Naive thymus-derived CD4-positive, alpha-beta T cell (primary cell): ENCODE measurements at regions of chr12 and their contacts with region 1.

Region 1: DNA sequence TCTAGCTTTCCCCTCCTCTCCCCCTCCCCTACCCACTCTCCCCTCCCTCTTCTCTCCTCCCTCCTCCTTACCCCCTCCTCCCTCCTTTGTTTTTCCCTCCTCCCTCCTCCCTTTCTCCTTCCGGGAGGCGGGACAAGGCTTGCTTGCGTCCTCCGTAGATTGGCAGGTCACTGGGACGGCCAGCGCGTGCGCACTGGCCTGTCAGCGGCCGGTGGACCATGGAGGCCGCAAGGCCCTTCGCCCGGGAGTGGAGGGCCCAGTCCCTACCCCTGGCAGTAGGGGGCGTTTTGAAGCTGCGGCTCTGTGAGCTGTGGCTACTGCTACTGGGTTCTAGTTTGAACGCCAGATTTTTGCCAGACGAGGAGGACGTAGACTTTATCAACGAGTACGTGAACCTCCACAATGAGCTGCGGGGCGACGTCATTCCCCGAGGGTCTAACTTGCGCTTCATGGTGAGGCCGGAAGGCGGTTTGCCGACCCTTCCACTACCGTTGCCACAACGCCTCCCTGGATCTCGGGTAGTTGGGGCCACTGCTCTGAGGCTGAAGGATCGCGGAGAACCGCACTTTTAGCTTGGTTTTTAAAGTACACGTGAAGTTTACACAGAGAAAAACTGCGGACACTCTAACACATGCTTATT is at the start of gene GLIPR1L2:
- DNase-seq: peak; percentile 75 to 86 (median 80)
- ATAC-seq: peak; percentile 96
- H3K4me3 ChIP-seq: peak within 1 kb of the TSS; percentile 67
- H3K4me3 Mint-ChIP-seq: peak within 1 kb of the TSS; percentile 87 to 98 (median 94)
- H3K27ac ChIP-seq: peak within 1 kb of the TSS; percentile 79
- H3K27ac Mint-ChIP-seq: peak within 1 kb of the TSS; percentile 93 to 99 (median 98)
- H3K4me1 ChIP-seq: peaks cover 14 to 19% of the 10 kb centered on the region in 2 donors
- H3K4me1 Mint-ChIP-seq: peaks cover 26 to 61% (median 44%) of the 10 kb centered on the region in 7 donors
- H3K27me3 ChIP-seq: no peaks in the 10 kb centered on the region
- H3K27me3 Mint-ChIP-seq: peaks cover 0 to 3% (median 0%) of the 10 kb centered on the region in 5 donors
- total RNA-seq, gene GLIPR1L2: 0.22 to 2.3 (median 0.38) TPM

Region 2: GRCh38 chr12:74922117-74922516 is 468.9 kb before region 1 on chr12:
- CTCF ChIA-PET with region 1: no interaction called
- POLR2A ChIA-PET with region 1: no interaction called
- intact Hi-C with region 1: no loop called
- DNase-seq: no peak
- ATAC-seq: no peak
- H3K4me3 ChIP-seq: no peak overlapping the region
- H3K4me3 Mint-ChIP-seq: no peak overlapping the region
- H3K27ac ChIP-seq: no peak overlapping the region
- H3K27ac Mint-ChIP-seq: no peak overlapping the region
- H3K4me1 ChIP-seq: no peaks in the 10 kb centered on the region
- H3K4me1 Mint-ChIP-seq: no peaks in the 10 kb centered on the region
- H3K27me3 ChIP-seq: no peaks in the 10 kb centered on the region
- H3K27me3 Mint-ChIP-seq: no peaks in the 10 kb centered on the region

Region 3: DNA sequence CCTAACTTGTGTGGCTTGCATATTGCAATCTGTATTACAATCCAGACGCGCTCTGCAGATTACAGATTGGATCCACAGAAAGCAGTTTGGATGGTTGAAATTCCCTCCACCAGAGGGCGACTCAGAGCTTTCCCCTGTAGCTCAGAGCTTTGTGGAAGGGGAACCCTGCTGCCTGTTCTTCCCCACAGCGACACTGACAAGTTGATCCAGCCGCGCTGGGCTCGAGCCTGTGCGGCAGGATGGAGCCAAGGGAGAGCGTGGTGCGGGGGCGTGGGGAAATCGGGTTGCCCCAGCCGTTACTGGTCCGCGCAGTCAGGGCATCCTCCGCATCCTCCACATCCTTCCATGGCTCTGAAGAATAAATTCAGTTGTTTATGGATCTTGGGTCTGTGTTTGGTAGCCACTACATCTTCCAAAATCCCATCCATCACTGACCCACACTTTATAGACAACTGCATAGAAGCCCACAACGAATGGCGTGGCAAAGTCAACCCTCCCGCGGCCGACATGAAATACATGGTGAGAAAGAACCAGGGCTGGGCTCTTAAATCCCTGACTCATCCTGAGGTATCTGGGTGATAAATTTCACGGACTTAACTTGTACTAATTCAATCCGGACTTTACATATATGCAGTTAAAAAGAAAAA is 56.5 kb before region 1 on chr12 and contains the start of gene GLIPR1L1:
- CTCF ChIA-PET with region 1: no interaction called
- POLR2A ChIA-PET with region 1: no interaction called
- intact Hi-C with region 1: loop called (anchors 1 kb)
- DNase-seq: peak; percentile 58 to 79 (median 74)
- ATAC-seq: peak; percentile 91
- H3K4me3 ChIP-seq: no peak within 1 kb of the TSS
- H3K4me3 Mint-ChIP-seq: peak within 1 kb of the TSS; percentile 18 to 80 (median 74)
- H3K27ac ChIP-seq: no peak within 1 kb of the TSS
- H3K27ac Mint-ChIP-seq: peak within 1 kb of the TSS in 1 of 9 donors; percentile 3
- H3K4me1 ChIP-seq: peaks cover 0 to 5% of the 10 kb centered on the region in 2 donors
- H3K4me1 Mint-ChIP-seq: peaks cover 11 to 29% (median 18%) of the 10 kb centered on the region in 7 donors
- H3K27me3 ChIP-seq: peaks cover 0 to 6% of the 10 kb centered on the region in 2 donors
- H3K27me3 Mint-ChIP-seq: peaks cover 16 to 56% (median 31%) of the 10 kb centered on the region in 5 donors
- total RNA-seq, gene GLIPR1L1: not detected

Region 4: GRCh38 chr12:75505706-75506312 is 114.8 kb after region 1 on chr12:
- CTCF ChIA-PET with region 1: interaction called, 4 read pairs
- POLR2A ChIA-PET with region 1: interaction called, 13 read pairs
- intact Hi-C with region 1: loop called (anchors 1 kb)
- DNase-seq: peak in 4 of 9 donors; percentile 18 to 42 (median 29)
- ATAC-seq: peak; percentile 75
- H3K4me3 ChIP-seq: no peak overlapping the region
- H3K4me3 Mint-ChIP-seq: no peak overlapping the region
- H3K27ac ChIP-seq: no peak overlapping the region
- H3K27ac Mint-ChIP-seq: peak overlapping the region in 4 of 9 donors; percentile 0 to 71 (median 5)
- H3K4me1 ChIP-seq: peaks cover 12 to 13% of the 10 kb centered on the region in 2 donors
- H3K4me1 Mint-ChIP-seq: peaks cover 14 to 38% (median 32%) of the 10 kb centered on the region in 7 donors
- H3K27me3 ChIP-seq: no peaks in the 10 kb centered on the region
- H3K27me3 Mint-ChIP-seq: no peaks in the 10 kb centered on the region

Region 5: DNA sequence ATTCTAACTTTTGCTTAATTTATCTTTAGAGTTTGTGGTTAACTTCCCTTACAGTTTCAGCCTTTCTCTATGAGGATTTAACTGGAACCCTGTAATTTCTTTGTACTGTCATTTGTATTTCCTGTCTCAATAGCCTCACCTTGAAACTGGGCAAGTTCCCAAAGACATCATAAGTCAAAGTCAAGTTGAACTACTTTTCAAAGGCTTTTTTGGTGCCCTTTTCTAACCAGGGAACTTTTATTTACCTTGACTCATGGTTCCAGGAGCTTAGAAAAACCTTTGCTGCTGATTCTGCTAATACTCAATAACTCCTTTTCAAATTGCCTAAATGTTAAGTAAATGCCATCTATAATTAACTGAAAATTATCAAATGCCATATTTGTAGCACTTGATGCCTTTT is 321.2 kb after region 1 on chr12:
- CTCF ChIA-PET with region 1: no interaction called
- POLR2A ChIA-PET with region 1: no interaction called
- intact Hi-C with region 1: loop called in 1 of 2 experiments (anchors 10 kb)
- DNase-seq: no peak
- ATAC-seq: no peak
- H3K4me3 ChIP-seq: no peak overlapping the region
- H3K4me3 Mint-ChIP-seq: no peak overlapping the region
- H3K27ac ChIP-seq: no peak overlapping the region
- H3K27ac Mint-ChIP-seq: no peak overlapping the region
- H3K4me1 ChIP-seq: no peaks in the 10 kb centered on the region
- H3K4me1 Mint-ChIP-seq: peaks cover 0 to 3% (median 0%) of the 10 kb centered on the region in 7 donors
- H3K27me3 ChIP-seq: no peaks in the 10 kb centered on the region
- H3K27me3 Mint-ChIP-seq: peaks cover 0 to 47% (median 0%) of the 10 kb centered on the region in 5 donors

Region 6: GRCh38 chr12:76348079-76348901 is 957.3 kb after region 1 on chr12 and contains the start of gene BBS10:
- CTCF ChIA-PET with region 1: no interaction called
- POLR2A ChIA-PET with region 1: no interaction called
- intact Hi-C with region 1: loop called (anchors 1 to 2 kb)
- DNase-seq: peak; percentile 64 to 86 (median 84)
- ATAC-seq: peak; percentile 97
- H3K4me3 ChIP-seq: peak within 1 kb of the TSS; percentile 88
- H3K4me3 Mint-ChIP-seq: peak within 1 kb of the TSS; percentile 89 to 98 (median 96)
- H3K27ac ChIP-seq: peak within 1 kb of the TSS; percentile 79
- H3K27ac Mint-ChIP-seq: peak within 1 kb of the TSS; percentile 85 to 95 (median 93)
- H3K4me1 ChIP-seq: peaks cover 16 to 20% of the 10 kb centered on the region in 2 donors
- H3K4me1 Mint-ChIP-seq: peaks cover 15 to 48% (median 30%) of the 10 kb centered on the region in 7 donors
- H3K27me3 ChIP-seq: no peaks in the 10 kb centered on the region
- H3K27me3 Mint-ChIP-seq: no peaks in the 10 kb centered on the region
- total RNA-seq, gene BBS10: 2.5 to 11.5 (median 5.2) TPM

Region 7: GRCh38 chr12:76799362-76799761 is 1408.3 kb after region 1 on chr12:
- CTCF ChIA-PET with region 1: no interaction called
- POLR2A ChIA-PET with region 1: no interaction called
- intact Hi-C with region 1: no loop called
- DNase-seq: no peak
- ATAC-seq: no peak
- H3K4me3 ChIP-seq: no peak overlapping the region
- H3K4me3 Mint-ChIP-seq: no peak overlapping the region
- H3K27ac ChIP-seq: no peak overlapping the region
- H3K27ac Mint-ChIP-seq: no peak overlapping the region
- H3K4me1 ChIP-seq: no peaks in the 10 kb centered on the region
- H3K4me1 Mint-ChIP-seq: peaks cover 8 to 41% (median 24%) of the 10 kb centered on the region in 7 donors
- H3K27me3 ChIP-seq: no peaks in the 10 kb centered on the region
- H3K27me3 Mint-ChIP-seq: no peaks in the 10 kb centered on the region